ENCODE measurements at regions of chr4 and their contacts with region 1.

Region 1: DNA sequence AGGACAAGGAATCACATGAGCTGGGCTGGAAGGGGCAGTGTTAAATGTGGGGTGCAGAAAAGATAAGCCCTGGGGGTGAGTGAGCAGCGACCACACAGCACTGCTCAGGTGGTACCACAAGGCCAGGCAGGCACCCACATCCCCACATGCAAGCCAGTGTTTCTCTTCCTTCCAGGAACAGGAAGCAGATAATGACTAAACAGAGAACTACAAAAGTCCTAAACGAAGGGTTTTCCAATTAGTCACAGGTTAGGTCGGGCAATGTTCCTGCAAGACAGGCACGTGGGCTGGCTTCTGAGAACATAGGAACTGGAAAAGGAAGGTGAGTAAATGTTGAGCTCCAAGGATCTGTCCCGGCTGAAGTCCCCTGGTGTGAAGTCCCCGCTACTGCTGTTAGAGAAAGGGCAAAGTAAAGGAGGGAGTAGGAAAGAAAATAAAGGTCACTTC is 19.5 kb downstream of the RELL1 start:
- DNase-seq: peak; percentile 96
- H3K4me3 ChIP-seq: peak overlapping the region in 1 of 3 experiments; percentile 42
- H3K27ac ChIP-seq: peak overlapping the region; percentile 99
- H3K4me1 ChIP-seq: peaks cover 67% of the 10 kb centered on the region
- H3K27me3 ChIP-seq: no peaks in the 10 kb centered on the region
- CTCF ChIP-seq: peak; percentile 26 to 37
- POLR2A ChIP-seq: peak; percentile 56

Region 2: GRCh38 chr4:37648096-37648817 is 18.4 kb before region 1 on chr4:
- CTCF ChIA-PET with region 1: interaction called, 14 read pairs
- POLR2A ChIA-PET with region 1: no interaction called
- dilution Hi-C with region 1: no loop called
- intact Hi-C with region 1: loop called (anchors 1 kb)
- DNase-seq: peak; percentile 90
- H3K4me3 ChIP-seq: no peak overlapping the region
- H3K27ac ChIP-seq: peak overlapping the region; percentile 29
- H3K4me1 ChIP-seq: peaks cover 17% of the 10 kb centered on the region
- H3K27me3 ChIP-seq: no peaks in the 10 kb centered on the region
- CTCF ChIP-seq: no peak
- POLR2A ChIP-seq: no peak

Region 3: DNA sequence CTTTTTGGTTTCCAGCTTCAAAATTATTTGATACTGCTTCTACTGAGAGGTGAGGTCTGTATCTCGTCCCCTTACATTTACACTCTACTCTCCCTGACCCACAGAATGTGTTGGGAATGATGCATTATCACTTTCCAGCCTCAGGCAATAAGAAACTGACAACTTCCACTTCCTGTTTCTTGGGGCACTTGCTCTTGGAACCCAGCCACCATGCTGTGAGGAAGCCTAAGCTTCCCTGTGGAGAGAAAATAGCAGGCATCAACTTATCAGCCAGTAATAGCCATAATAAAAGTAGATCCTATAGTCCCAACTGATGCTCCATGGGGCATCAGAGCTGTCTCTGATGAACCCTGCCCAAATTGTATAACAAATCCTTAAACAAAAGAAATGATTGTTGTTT is 13.0 kb before region 1 on chr4:
- CTCF ChIA-PET with region 1: interaction called, 14 read pairs
- POLR2A ChIA-PET with region 1: no interaction called
- dilution Hi-C with region 1: no loop called
- intact Hi-C with region 1: loop called (anchors 1 kb)
- DNase-seq: peak; percentile 26
- H3K4me3 ChIP-seq: no peak overlapping the region
- H3K27ac ChIP-seq: no peak overlapping the region
- H3K4me1 ChIP-seq: peaks cover 20% of the 10 kb centered on the region
- H3K27me3 ChIP-seq: no peaks in the 10 kb centered on the region
- CTCF ChIP-seq: no peak
- POLR2A ChIP-seq: no peak

Region 4: DNA sequence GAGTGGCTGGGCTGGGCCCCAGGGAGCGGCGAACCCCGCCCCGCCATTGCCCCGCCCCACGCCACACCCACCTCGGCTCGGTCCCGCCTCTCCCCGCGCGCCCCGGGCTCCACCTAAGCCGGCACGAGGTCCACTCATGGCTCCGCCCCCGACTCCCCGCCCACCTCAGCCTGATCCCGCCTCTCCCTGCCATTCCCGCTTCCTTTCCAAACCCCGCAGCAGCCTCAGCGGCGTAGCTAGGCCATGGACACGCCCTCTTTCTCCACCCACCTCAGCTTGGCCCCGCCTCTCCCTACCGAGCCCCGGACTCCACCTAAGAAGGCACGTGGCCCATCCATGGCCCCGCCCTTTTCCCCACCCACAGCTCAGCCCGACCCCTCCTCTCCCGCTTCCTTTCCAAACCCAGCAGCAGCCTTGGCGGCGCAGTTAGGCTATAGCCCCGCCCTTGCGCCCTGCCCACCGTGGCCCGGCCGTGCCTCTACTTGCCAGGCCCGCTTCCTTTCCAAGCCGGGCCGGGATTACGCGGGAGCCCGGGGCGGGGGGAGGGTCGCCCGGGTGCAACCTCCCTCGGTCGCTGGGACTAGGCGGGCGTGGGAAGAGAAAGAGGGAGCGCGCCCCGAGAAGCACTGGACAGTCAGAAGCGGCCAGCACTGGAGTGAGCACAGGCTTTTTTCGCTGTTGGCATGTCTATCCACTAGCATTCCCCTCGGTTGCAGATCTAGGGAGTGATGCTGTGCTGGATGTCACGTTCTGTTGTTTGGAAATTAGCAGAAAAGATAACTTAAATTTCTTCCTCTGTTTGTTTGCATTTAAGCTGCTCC is 19.9 kb after region 1 on chr4 and contains the start of gene RELL1:
- CTCF ChIA-PET with region 1: interaction called, 7 read pairs
- POLR2A ChIA-PET with region 1: interaction called, 19 read pairs
- dilution Hi-C with region 1: no loop called
- intact Hi-C with region 1: loop called (anchors 1 kb)
- DNase-seq: peak; percentile 100
- H3K4me3 ChIP-seq: peak within 1 kb of the TSS; percentile 68 to 95 (median 86)
- H3K27ac ChIP-seq: peak within 1 kb of the TSS; percentile 79
- H3K4me1 ChIP-seq: peaks cover 24% of the 10 kb centered on the region
- H3K27me3 ChIP-seq: no peaks in the 10 kb centered on the region
- CTCF ChIP-seq: no peak
- POLR2A ChIP-seq: no peak
- total RNA-seq, gene RELL1: 87.1 and 91.7 TPM in 2 replicates

Region 5: DNA sequence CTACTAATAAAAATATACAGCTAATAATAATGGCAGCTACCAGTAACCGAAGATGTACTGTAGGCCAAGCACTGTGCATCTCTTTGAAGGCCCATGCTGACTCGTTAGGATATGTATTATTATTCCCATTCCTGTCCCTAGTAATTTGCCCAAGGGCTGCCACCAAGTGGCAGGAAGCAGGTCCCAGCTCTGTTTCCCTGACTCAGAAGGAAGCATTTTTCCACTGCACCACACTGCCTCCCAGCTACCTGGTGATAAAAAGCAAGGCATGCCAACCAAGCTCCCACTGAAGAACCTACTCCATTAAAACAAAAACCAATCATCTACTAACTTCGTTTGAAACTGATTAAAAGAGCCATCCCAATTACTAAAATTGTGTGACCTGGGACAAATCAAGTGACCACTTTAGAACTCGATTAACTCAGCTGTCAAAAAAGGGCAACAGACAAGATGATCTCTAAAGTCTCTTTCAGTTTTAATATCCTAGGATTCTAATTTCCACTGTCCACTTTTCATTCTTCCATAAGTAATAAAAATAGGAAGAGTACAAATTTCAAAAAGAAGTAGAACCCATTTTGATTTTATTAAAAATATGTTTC is 135.5 kb after region 1 on chr4:
- CTCF ChIA-PET with region 1: interaction called, 11 read pairs
- POLR2A ChIA-PET with region 1: no interaction called
- dilution Hi-C with region 1: no loop called
- intact Hi-C with region 1: no loop called
- DNase-seq: peak; percentile 73
- H3K4me3 ChIP-seq: no peak overlapping the region
- H3K27ac ChIP-seq: no peak overlapping the region
- H3K4me1 ChIP-seq: no peaks in the 10 kb centered on the region
- H3K27me3 ChIP-seq: peaks cover 0 to 3% of the 10 kb centered on the region in 2 experiments
- CTCF ChIP-seq: peak; percentile 42 to 51
- POLR2A ChIP-seq: no peak

Region 6: DNA sequence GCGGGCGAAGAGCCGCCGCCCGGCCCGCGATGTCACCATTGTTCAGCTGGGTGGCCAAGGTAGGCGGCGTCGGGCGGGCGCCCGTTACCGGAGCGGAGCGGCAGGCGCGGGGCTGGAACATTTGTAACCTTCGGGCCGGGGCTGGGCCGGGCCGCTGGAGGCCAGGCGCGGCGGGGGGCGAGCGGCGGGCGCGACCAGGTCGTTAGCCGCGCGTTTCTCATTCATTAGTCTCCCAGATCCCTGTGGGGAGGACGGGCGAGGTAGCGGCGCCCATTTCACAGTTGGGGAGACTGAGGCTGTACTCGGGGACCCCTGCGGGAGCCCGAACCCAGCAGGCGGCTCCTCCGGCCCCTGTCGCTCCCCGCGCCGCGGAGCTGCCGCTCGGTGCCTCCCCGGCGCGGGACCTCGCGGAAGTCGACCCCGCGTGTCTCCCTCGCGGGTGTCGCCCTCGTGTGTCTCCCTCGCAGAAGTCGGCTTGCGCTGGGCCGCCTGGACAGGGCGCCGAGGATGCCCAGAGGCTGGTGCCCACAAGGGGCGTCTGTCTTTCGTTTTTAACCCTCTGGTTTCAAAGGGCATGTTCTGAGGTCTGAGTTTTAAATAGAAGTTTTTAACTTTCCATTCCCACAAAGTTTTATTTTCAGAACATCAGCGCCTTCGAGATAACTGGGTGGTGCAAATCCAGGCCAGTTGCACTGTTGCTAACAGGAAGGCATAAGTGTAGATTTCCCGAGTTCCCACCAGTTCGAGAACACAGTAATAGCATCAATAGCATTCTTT is 311.0 kb after region 1 on chr4:
- CTCF ChIA-PET with region 1: no interaction called
- POLR2A ChIA-PET with region 1: no interaction called
- dilution Hi-C with region 1: no loop called
- intact Hi-C with region 1: loop called (anchors 5 kb)
- DNase-seq: peak; percentile 69
- H3K4me3 ChIP-seq: peak overlapping the region; percentile 21 to 77 (median 74)
- H3K27ac ChIP-seq: peak overlapping the region; percentile 83
- H3K4me1 ChIP-seq: peaks cover 13% of the 10 kb centered on the region
- H3K27me3 ChIP-seq: no peaks in the 10 kb centered on the region
- CTCF ChIP-seq: peak; percentile 52 to 82
- POLR2A ChIP-seq: no peak

Region 7: DNA sequence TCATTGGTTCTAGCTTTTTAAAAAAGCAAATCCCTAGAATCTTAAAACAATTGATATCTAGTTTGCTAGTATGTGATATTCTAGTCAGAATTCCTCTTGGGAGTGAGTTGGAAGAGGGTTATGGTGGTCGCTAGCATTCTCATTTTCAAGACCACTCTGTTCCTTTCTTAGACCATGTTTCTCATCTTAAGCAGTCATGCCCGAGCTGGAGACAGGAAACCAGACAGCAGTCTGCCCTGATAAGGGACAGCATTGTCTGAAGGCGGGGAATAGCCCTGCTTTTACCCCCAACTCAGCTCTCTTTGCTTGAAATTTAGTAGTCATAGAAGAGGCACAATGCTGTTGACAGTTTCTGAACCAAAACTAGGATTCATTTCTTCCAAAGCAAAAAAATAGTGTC is 1002.6 kb after region 1 on chr4:
- CTCF ChIA-PET with region 1: no interaction called
- POLR2A ChIA-PET with region 1: interaction called, 7 read pairs
- dilution Hi-C with region 1: no loop called
- intact Hi-C with region 1: loop called (anchors 2 kb)
- DNase-seq: peak; percentile 86
- H3K4me3 ChIP-seq: peak overlapping the region in 1 of 3 experiments; percentile 67
- H3K27ac ChIP-seq: peak overlapping the region; percentile 99
- H3K4me1 ChIP-seq: peaks cover 75% of the 10 kb centered on the region
- H3K27me3 ChIP-seq: no peaks in the 10 kb centered on the region
- CTCF ChIP-seq: no peak
- POLR2A ChIP-seq: no peak